BJ (cell line): ENCODE measurements at regions of chr10 and their contacts with region 1.

Region 1: GRCh38 chr10:62779487-62780248 is 24.9 kb upstream of the ADO start:
- DNase-seq: no peak
- H3K4me3 ChIP-seq: no peak overlapping the region
- H3K27me3 ChIP-seq: peaks cover 1% of the 10 kb centered on the region
- CTCF ChIP-seq: no peak

Region 2: DNA sequence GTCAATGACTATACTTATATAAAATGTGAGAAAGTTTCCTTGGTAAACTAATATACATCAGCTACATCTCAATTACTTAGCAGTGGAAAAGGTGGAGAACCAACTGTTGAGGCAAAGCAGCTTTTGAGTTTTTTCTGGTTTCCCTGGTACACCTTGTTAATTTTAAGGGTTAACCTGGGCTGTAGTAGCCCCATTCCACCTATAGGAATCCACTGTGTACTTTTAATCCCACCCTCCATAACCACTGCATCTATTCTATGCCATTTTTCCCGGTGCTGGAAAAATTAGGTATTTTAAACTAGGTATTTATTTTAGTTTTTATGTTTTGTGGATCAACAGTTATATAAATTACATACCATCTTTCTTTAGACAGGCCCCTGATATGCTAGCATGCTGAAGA is 395.9 kb after region 1 on chr10:
- CTCF ChIA-PET with region 1: no interaction called
- POLR2A ChIA-PET with region 1: interaction called, 17 read pairs
- DNase-seq: no peak
- H3K4me3 ChIP-seq: no peak overlapping the region
- H3K27me3 ChIP-seq: no peaks in the 10 kb centered on the region
- CTCF ChIP-seq: no peak